CD4-positive, alpha-beta memory T cell (primary cell): ENCODE measurements at regions of chr15 and their contacts with region 1.

Region 1: GRCh38 chr15:92797168-92797951 is 102.8 kb upstream of the CHD2 start:
- DNase-seq: peak; percentile 63 to 79 (median 75)
- H3K4me3 ChIP-seq: no peak overlapping the region
- H3K4me3 Mint-ChIP-seq: no peak overlapping the region
- H3K27ac ChIP-seq: no peak overlapping the region
- H3K27ac Mint-ChIP-seq: peak overlapping the region; percentile 43 to 92 (median 91)
- H3K4me1 ChIP-seq: peaks cover 7% of the 10 kb centered on the region
- H3K4me1 Mint-ChIP-seq: peaks cover 6 to 9% (median 7%) of the 10 kb centered on the region in 4 donors
- H3K27me3 ChIP-seq: no peaks in the 10 kb centered on the region
- H3K27me3 Mint-ChIP-seq: no peaks in the 10 kb centered on the region

Region 2: DNA sequence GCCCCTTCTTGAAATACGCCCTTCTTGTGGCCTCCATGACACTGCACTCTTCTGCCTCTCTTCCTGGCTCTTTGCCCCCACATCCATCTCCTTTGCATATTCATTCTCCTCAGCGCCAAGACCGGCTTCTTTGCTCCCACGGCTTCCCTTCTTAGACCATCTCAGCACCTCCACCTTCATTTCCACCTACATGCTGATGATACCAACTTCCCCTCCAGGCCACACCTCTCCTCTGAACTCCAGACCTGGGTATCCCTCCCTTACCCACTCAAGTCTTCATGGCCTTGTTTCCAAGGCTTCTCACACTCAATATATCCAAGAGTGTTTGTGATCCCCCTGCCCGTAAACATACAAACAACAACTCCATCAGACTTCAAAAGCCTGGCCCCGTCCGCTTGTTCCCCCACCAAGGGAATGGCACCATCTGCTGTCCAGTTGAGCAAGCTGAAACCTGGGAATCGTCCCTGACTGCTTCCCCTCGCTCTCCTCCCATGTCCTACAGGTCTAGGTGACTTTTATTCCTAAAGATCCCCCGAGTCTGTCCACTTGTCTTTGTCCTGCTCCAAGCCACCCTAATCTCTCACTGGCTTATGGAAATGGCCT is 114.0 kb before region 1 on chr15:
- CTCF ChIA-PET with region 1: no interaction called
- POLR2A ChIA-PET with region 1: no interaction called
- intact Hi-C with region 1: no loop called
- DNase-seq: no peak
- H3K4me3 ChIP-seq: no peak overlapping the region
- H3K4me3 Mint-ChIP-seq: no peak overlapping the region
- H3K27ac ChIP-seq: no peak overlapping the region
- H3K27ac Mint-ChIP-seq: no peak overlapping the region
- H3K4me1 ChIP-seq: no peaks in the 10 kb centered on the region
- H3K4me1 Mint-ChIP-seq: no peaks in the 10 kb centered on the region
- H3K27me3 ChIP-seq: no peaks in the 10 kb centered on the region
- H3K27me3 Mint-ChIP-seq: peaks cover 9 to 31% of the 10 kb centered on the region in 2 donors

Region 3: GRCh38 chr15:92903941-92904831 is 106.8 kb after region 1 on chr15:
- CTCF ChIA-PET with region 1: interaction called, 22 read pairs
- POLR2A ChIA-PET with region 1: interaction called, 592 read pairs
- intact Hi-C with region 1: no loop called
- DNase-seq: peak; percentile 99
- H3K4me3 ChIP-seq: peak overlapping the region; percentile 67 to 75
- H3K4me3 Mint-ChIP-seq: peak overlapping the region; percentile 94 to 99 (median 98)
- H3K27ac ChIP-seq: peak overlapping the region; percentile 95
- H3K27ac Mint-ChIP-seq: peak overlapping the region; percentile 98 to 100 (median 100)
- H3K4me1 ChIP-seq: peaks cover 71% of the 10 kb centered on the region
- H3K4me1 Mint-ChIP-seq: peaks cover 50 to 78% (median 63%) of the 10 kb centered on the region in 4 donors
- H3K27me3 ChIP-seq: no peaks in the 10 kb centered on the region
- H3K27me3 Mint-ChIP-seq: no peaks in the 10 kb centered on the region

Region 4: DNA sequence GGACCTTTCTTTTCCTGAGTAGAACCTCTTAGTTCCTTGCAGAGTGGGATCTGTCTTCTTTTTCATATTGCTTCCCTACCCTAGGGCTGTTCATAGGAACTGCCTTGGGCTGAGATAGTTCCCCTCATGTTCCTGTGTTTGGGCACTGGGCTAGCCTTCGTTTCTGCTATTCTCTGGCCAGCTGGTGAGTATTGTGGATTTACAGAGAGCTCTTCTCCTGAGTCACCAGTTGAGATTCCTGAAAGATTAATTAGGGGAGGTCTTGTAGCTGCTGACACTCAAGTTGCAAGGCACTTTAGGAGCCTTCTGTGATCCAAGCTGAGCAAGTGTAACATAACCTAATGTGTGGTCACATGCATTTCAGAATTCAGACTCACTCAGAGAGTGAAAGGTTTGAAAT is 133.4 kb after region 1 on chr15:
- CTCF ChIA-PET with region 1: interaction called, 49 read pairs
- POLR2A ChIA-PET with region 1: interaction called, 4 read pairs
- intact Hi-C with region 1: no loop called
- DNase-seq: no peak
- H3K4me3 ChIP-seq: no peak overlapping the region
- H3K4me3 Mint-ChIP-seq: peak overlapping the region in 2 of 8 donors; percentile 10 to 25
- H3K27ac ChIP-seq: no peak overlapping the region
- H3K27ac Mint-ChIP-seq: peak overlapping the region in 4 of 7 donors; percentile 5 to 68 (median 40)
- H3K4me1 ChIP-seq: peaks cover 40% of the 10 kb centered on the region
- H3K4me1 Mint-ChIP-seq: peaks cover 33 to 69% (median 50%) of the 10 kb centered on the region in 4 donors
- H3K27me3 ChIP-seq: no peaks in the 10 kb centered on the region
- H3K27me3 Mint-ChIP-seq: no peaks in the 10 kb centered on the region

Region 5: GRCh38 chr15:92942706-92943105 is 145.3 kb after region 1 on chr15:
- CTCF ChIA-PET with region 1: interaction called, 20 read pairs
- POLR2A ChIA-PET with region 1: no interaction called
- intact Hi-C with region 1: no loop called
- DNase-seq: no peak
- H3K4me3 ChIP-seq: no peak overlapping the region
- H3K4me3 Mint-ChIP-seq: no peak overlapping the region
- H3K27ac ChIP-seq: no peak overlapping the region
- H3K27ac Mint-ChIP-seq: peak overlapping the region in 4 of 7 donors; percentile 3 to 72 (median 18)
- H3K4me1 ChIP-seq: no peaks in the 10 kb centered on the region
- H3K4me1 Mint-ChIP-seq: peaks cover 10 to 15% (median 13%) of the 10 kb centered on the region in 4 donors
- H3K27me3 ChIP-seq: no peaks in the 10 kb centered on the region
- H3K27me3 Mint-ChIP-seq: no peaks in the 10 kb centered on the region

Region 6: DNA sequence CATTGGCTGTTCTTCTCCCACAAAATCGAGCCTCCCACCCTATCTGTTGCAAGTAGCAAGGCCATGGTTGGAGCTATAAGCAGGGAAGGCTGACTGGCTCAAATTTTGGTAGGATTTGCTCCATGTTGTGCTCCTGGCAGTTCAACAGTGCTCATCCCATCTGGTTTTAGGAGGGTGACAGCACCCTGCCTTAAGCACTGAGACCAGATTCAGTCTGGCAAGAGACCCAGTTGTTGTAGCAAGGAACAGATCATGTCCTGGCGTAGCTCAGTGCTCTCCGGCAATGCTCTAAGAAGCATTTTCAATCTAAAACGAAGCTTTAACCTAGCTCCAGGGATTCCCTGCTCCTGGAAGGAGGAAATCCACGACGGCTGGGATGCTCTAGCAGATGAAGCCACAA is 200.5 kb after region 1 on chr15:
- CTCF ChIA-PET with region 1: interaction called, 10 read pairs
- POLR2A ChIA-PET with region 1: no interaction called
- intact Hi-C with region 1: no loop called
- DNase-seq: no peak
- H3K4me3 ChIP-seq: no peak overlapping the region
- H3K4me3 Mint-ChIP-seq: no peak overlapping the region
- H3K27ac ChIP-seq: no peak overlapping the region
- H3K27ac Mint-ChIP-seq: peak overlapping the region in 2 of 7 donors; percentile 63 to 83
- H3K4me1 ChIP-seq: no peaks in the 10 kb centered on the region
- H3K4me1 Mint-ChIP-seq: peaks cover 1 to 7% (median 5%) of the 10 kb centered on the region in 4 donors
- H3K27me3 ChIP-seq: no peaks in the 10 kb centered on the region
- H3K27me3 Mint-ChIP-seq: no peaks in the 10 kb centered on the region

Region 7: DNA sequence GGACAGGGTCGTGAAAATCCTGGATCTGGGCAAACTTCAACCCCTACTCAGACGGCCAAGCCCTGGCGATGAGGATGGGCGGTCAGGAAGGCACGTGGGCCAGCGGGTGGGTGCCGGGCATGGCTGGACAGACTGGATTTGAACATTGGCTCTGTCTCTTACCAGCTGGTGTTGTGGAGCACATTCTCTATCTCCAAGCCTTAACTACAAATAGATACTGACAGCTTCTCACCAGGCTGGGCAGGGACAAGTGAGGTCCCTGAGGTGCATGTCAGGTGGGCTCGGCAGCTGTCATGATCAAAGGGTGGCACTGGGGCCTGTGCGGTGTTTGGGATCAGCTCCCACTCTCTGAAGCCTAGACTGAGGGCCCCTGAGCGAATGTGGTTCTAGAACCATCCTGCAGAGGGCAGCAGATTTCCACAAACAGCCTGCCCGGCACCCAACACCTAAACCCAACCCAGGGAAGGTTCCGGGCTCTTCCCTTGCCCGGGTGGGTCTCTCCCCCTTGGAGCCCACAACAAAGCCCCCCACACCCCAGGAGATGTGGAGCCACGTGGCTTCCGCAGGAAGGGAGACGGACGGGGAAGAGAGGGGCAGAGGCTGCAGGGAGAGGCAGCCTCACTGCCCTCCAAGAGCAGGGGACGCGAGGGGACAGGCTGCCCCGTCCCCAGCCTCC is 233.2 kb after region 1 on chr15:
- CTCF ChIA-PET with region 1: interaction called, 26 read pairs
- POLR2A ChIA-PET with region 1: no interaction called
- intact Hi-C with region 1: no loop called
- DNase-seq: peak in 4 of 5 donors; percentile 57 to 71 (median 63)
- H3K4me3 ChIP-seq: no peak overlapping the region
- H3K4me3 Mint-ChIP-seq: peak overlapping the region in 1 of 8 donors; percentile 27
- H3K27ac ChIP-seq: no peak overlapping the region
- H3K27ac Mint-ChIP-seq: peak overlapping the region; percentile 17 to 85 (median 66)
- H3K4me1 ChIP-seq: peaks cover 22% of the 10 kb centered on the region
- H3K4me1 Mint-ChIP-seq: peaks cover 14 to 29% (median 19%) of the 10 kb centered on the region in 4 donors
- H3K27me3 ChIP-seq: no peaks in the 10 kb centered on the region
- H3K27me3 Mint-ChIP-seq: no peaks in the 10 kb centered on the region